Sigmoid colon (tissue), 7 donors: ENCODE measurements at regions of chr9 and their contacts with region 1.

Region 1: GRCh38 chr9:130780865-130781504 is 54.1 kb upstream of the ABL1 start:
- DNase-seq: peak; percentile 95
- H3K4me3 ChIP-seq: peak overlapping the region; percentile 32 to 46 (median 38)
- H3K27ac ChIP-seq: peak overlapping the region; percentile 91 to 97 (median 96)
- H3K4me1 ChIP-seq: peaks cover 0 to 73% (median 63%) of the 10 kb centered on the region in 4 donors
- H3K27me3 ChIP-seq: no peaks in the 10 kb centered on the region
- CTCF ChIP-seq: no peak
- EP300 ChIP-seq: peak; percentile 96 to 99 (median 98)
- POLR2A ChIP-seq: peak; percentile 83 to 88

Region 2: DNA sequence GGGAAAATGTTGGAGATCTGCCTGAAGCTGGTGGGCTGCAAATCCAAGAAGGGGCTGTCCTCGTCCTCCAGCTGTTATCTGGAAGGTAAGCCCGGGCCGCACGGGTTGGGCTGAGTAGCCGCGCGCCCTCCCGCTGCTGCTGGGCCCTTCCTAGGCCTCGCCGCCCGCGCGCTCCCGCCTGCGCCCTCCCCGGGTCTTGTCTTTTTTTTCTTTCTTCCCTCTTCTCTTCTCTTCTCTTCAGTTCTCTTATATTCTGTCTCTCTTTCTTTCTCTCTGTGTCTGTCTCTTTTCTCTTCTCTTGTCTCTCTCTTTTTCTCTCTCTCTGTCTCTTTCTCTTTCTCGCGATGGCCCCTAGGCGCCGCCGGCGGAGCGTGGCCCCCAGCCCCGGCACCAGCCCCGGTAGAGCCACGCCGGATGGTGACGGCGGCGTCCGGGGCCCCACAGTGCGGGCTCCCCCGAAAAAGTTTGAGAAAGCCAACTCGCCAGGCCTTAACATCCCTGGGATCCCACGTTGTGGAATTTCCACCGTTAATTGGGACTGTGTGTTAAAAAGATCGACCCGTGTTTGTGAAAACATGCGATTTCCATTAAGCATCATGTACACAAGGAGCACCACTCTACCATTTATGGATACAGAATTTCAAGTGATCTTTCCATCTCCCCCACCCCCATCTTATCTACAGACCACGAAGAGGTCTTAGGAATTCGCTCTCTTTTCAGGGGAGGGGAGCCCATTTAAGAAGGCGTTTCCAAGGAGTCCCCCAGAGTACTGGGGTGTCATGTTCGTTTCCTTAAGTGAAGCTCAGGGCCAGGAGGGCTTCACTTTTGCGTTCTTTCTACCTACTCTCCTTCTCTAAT is 54.7 kb after region 1 on chr9:
- intact Hi-C with region 1: loop called (anchors 2 kb)
- DNase-seq: peak; percentile 79
- H3K4me3 ChIP-seq: peak overlapping the region; percentile 61 to 77 (median 71)
- H3K27ac ChIP-seq: peak overlapping the region; percentile 89 to 95 (median 93)
- H3K4me1 ChIP-seq: peaks cover 0 to 66% (median 52%) of the 10 kb centered on the region in 4 donors
- H3K27me3 ChIP-seq: no peaks in the 10 kb centered on the region
- CTCF ChIP-seq: no peak
- EP300 ChIP-seq: no peak
- POLR2A ChIP-seq: no peak

Region 3: DNA sequence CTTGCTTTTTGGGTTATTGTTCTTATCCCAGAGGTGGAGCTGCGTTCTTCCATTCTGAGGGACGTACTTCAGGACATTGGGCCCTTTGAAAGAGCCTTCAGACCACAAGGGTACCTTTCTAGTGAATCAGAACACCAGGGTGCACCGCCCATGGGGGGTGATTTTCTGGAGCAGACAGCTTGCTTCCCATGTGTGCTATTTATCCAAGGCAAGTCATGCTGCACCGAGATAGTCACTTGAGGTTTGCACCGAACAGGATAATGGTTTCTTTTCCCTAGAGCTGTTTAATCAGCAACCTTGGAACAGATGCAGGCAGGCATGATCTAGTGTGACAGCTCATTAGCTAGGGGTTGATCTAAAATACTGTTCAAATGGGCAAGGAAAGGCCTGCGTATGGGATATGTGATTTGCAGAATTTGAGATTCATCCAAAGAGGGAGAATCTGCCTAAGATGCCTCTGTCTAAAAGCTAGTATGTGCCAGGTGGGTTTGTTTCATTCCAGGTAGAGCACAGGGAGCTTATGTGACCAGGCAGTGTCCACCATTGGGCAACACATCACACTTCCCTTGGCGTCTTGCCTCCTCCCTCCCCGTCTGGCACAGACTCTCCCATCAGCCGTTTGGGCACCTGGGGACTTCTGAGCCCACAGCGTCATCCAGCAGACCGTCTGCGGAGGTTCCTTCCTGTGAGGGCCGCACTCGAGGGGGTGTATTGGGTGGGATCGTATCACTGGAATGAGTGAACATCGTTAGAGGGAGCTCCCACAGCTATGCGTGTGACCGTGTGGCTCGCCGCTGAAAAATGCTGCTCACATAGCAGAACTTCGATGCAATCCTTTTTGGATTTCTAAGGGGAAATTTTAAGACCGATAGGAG is 77.1 kb after region 1 on chr9:
- intact Hi-C with region 1: loop called (anchors 1 kb)
- DNase-seq: peak; percentile 93
- H3K4me3 ChIP-seq: peak overlapping the region in 1 of 4 donors; percentile 0
- H3K27ac ChIP-seq: peak overlapping the region; percentile 82 to 95 (median 87)
- H3K4me1 ChIP-seq: peaks cover 0 to 84% (median 81%) of the 10 kb centered on the region in 4 donors
- H3K27me3 ChIP-seq: no peaks in the 10 kb centered on the region
- CTCF ChIP-seq: no peak
- EP300 ChIP-seq: peak in 1 of 4 donors; percentile 28
- POLR2A ChIP-seq: no peak